ENCODE measurements at regions of chr3 and their contacts with region 1.

Region 1: DNA sequence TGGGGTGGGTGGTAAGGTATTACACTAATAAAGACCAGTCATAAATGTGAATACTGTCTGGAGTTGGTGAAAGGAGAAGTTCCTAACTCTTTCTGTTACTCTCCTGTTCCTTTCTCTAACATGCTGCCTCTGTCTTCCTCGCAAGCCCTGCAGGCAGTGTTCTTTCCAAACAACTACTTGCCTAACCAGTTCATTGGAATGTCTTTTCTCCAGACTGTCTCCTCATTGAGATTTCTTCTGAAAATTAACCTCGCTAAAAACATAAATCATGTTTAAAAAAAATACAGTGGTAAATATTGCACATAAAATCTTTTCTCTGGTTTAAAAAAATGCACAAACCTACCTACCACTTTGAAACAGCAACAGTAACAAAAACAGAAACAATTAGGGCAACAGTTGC is 135.2 kb downstream of the TP63 start:
- DNase-seq: no peak
- ATAC-seq: no peak
- H3K4me3 ChIP-seq: no peak overlapping the region
- H3K4me3 Mint-ChIP-seq: no peak overlapping the region
- H3K27ac ChIP-seq: no peak overlapping the region
- H3K27ac Mint-ChIP-seq: no peak overlapping the region
- H3K4me1 ChIP-seq: no peaks in the 10 kb centered on the region
- H3K4me1 Mint-ChIP-seq: no peaks in the 10 kb centered on the region
- H3K27me3 ChIP-seq: no peaks in the 10 kb centered on the region
- H3K27me3 Mint-ChIP-seq: no peaks in the 10 kb centered on the region
- CTCF ChIP-seq: no peak

Region 2: DNA sequence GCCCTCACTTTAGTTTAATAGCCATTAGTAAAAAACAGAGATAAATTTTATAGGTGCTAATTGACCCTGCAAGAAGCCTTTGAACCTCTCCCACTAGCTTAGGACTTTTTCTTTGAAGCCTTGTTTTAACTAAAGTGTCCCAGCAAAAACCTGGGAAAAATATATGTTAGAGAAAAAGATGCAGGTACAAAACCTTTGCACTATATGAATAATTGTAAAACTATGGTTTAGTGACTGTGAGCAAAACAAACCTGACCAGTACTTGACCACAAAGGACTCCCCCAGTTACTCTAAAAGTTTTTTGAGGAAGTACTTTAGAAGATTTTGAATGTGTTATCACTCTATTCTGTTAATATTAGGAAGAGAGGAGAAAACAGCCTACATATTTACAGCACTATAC is 258.6 kb before region 1 on chr3:
- CTCF ChIA-PET with region 1: no interaction called
- POLR2A ChIA-PET with region 1: no interaction called
- intact Hi-C with region 1: loop called in 1 of 2 experiments (anchors 10 kb)
- DNase-seq: no peak
- ATAC-seq: no peak
- H3K4me3 ChIP-seq: no peak overlapping the region
- H3K4me3 Mint-ChIP-seq: no peak overlapping the region
- H3K27ac ChIP-seq: no peak overlapping the region
- H3K27ac Mint-ChIP-seq: no peak overlapping the region
- H3K4me1 ChIP-seq: no peaks in the 10 kb centered on the region
- H3K4me1 Mint-ChIP-seq: peaks cover 5% of the 10 kb centered on the region
- H3K27me3 ChIP-seq: no peaks in the 10 kb centered on the region
- H3K27me3 Mint-ChIP-seq: peaks cover 2% of the 10 kb centered on the region
- CTCF ChIP-seq: no peak

Region 3: GRCh38 chr3:189786479-189787064 is 20.1 kb after region 1 on chr3:
- CTCF ChIA-PET with region 1: no interaction called
- POLR2A ChIA-PET with region 1: no interaction called
- intact Hi-C with region 1: no loop called
- DNase-seq: no peak
- ATAC-seq: no peak
- H3K4me3 ChIP-seq: no peak overlapping the region
- H3K4me3 Mint-ChIP-seq: no peak overlapping the region
- H3K27ac ChIP-seq: no peak overlapping the region
- H3K27ac Mint-ChIP-seq: no peak overlapping the region
- H3K4me1 ChIP-seq: no peaks in the 10 kb centered on the region
- H3K4me1 Mint-ChIP-seq: peaks cover 8% of the 10 kb centered on the region
- H3K27me3 ChIP-seq: no peaks in the 10 kb centered on the region
- H3K27me3 Mint-ChIP-seq: no peaks in the 10 kb centered on the region
- CTCF ChIP-seq: no peak